ENCODE measurements at regions of chr18 and their contacts with region 1.

Region 1: DNA sequence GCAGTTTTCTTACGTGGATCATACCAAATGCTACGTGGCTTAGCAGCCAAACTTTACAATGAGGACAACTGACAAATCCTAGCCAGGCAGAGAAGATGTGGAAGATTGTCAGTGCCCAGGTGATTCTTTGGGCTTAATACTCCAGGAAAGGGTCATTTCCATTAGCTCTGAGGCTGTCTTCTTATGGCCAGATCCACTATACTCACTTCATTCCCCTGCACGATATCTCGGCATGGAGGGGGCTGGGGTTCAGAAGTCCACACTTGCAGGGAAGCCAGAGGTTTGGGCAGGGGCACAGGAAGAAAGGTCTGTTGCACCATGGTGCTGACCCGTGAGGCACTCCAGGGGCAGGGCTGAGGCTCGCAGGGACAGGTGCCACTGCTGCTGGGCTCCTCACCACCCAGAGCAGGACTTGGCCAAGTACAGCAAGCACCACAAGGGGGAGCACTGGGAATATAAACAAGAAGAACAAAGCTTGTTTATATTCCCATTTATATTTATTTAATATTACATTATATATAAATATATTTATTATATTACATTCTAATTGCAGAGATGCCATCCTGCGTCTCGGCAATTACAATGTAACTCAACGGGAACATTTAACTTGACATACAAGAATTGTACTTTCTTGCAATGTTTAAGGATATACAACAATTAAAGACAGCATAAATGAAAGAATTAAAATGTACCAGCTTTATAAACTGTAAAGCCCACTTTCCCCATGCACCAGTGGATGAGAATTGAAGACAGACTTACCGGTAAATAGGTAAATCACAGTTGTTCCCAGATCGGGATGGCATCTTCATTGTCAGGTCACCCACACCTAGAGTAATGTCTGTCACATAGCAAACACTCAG is 27.2 kb downstream of the CLUL1 start:
- DNase-seq: peak; percentile 36 to 79
- H3K4me3 ChIP-seq: no peak overlapping the region
- H3K27ac ChIP-seq: no peak overlapping the region
- H3K4me1 ChIP-seq: no peaks in the 10 kb centered on the region
- H3K27me3 ChIP-seq: no peaks in the 10 kb centered on the region
- CTCF ChIP-seq: peak; percentile 70 to 77 (median 76)
- EP300 ChIP-seq: no peak
- POLR2A ChIP-seq: no peak
- RAD21 ChIP-seq: peak; percentile 68 to 76

Region 2: DNA sequence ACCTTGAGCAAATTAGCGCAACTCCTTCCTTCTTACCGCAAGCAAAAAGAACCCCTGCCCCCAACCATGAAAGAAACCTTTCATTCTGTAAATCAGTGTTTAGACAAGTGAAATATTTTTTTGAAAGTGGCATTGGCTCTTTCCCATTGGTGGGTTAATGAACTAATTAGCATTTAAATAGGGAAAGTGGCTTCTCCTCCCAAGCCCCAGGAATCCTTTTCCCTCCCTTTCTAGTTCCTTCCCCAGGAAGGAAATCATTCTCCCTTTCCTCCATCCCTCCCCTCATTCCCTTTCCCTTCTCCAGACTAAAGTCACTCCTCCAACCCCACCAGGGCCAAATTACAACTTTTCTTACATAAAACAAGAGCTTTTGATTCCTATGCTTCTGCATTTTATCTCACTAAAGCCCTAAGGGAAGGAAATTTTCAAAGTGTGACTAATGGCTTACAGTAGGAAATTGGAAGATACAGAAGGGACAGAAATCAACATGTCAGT is 10.6 kb after region 1 on chr18:
- CTCF ChIA-PET with region 1: interaction called, 24 read pairs
- POLR2A ChIA-PET with region 1: interaction called, 3 read pairs
- DNase-seq: peak in 1 of 2 experiments; percentile 5
- H3K4me3 ChIP-seq: peak overlapping the region in 1 of 4 experiments; percentile 43; a peak in 1 of 8 replicates
- H3K27ac ChIP-seq: no peak overlapping the region
- H3K4me1 ChIP-seq: peaks cover 0 to 8% (median 2%) of the 10 kb centered on the region in 4 experiments; a peak in 3 of 7 replicates
- H3K27me3 ChIP-seq: no peaks in the 10 kb centered on the region
- CTCF ChIP-seq: no peak
- EP300 ChIP-seq: no peak
- POLR2A ChIP-seq: no peak
- RAD21 ChIP-seq: no peak

Region 3: DNA sequence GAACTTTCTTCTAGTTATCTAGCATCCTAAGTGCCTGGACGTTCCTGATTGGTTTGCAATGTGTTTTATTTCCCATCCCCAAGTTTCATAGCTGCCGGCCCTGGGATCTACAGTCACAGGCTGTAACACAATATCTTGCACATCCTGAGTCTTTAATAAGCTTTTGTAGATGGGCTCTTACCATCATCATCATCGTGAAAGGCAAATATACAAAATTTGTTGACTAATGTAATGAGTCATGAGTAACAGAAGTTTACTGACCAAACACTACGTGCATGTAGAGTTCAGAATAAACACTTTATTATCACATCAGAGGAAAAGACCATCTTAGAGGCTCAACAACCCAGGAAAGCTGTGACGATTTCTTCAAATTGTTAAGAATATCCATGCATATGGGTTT is 25.4 kb after region 1 on chr18:
- CTCF ChIA-PET with region 1: interaction called, 28 read pairs
- POLR2A ChIA-PET with region 1: no interaction called
- DNase-seq: no peak
- H3K4me3 ChIP-seq: no peak overlapping the region
- H3K27ac ChIP-seq: no peak overlapping the region
- H3K4me1 ChIP-seq: no peaks in the 10 kb centered on the region
- H3K27me3 ChIP-seq: no peaks in the 10 kb centered on the region
- CTCF ChIP-seq: no peak
- EP300 ChIP-seq: no peak
- POLR2A ChIP-seq: no peak
- RAD21 ChIP-seq: no peak

Region 4: DNA sequence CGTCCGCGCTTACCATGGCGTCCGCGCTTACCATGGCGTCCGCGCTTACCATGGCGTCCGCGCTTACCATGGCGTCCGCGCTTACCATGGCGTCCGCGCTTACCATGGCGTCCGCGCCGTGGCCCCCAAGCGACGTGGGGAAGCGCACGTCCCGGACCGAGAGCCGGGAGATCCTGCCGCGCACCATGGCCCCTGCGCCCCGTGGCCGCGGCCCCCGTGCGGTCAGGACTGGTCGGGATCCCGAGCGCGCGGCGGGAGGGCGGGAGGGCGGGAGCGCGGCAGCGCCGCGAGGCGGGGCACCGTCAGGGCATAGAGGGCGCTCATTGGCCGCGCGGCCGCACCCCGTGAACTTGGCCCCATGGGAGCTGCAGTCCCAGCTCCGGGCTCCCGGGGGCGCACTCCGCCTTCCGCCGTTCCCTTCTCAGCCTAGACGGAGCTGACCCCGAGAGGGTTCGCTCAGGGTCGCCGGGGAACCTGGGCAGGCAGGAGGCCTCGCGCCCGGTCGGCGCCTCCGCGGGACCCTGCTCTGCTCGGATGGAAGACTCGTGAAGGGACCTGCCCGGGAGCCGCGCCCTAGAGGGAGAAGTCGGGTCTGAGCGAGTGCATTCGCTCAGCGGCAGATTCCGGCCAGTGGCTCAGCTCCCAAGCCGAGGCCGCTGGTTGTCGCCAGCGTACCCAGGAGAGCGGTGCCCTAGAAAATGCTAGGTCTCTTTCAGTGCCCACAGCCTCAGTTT is 88.6 kb after region 1 on chr18 and contains the start of gene ENOSF1:
- CTCF ChIA-PET with region 1: interaction called, 13 read pairs
- POLR2A ChIA-PET with region 1: no interaction called
- DNase-seq: peak; percentile 79 to 99
- H3K4me3 ChIP-seq: peak within 1 kb of the TSS; percentile 64 to 86 (median 76)
- H3K27ac ChIP-seq: peak within 1 kb of the TSS; percentile 50; the same call in 1 of the 2 replicates
- H3K4me1 ChIP-seq: peaks cover 0 to 3% (median 1%) of the 10 kb centered on the region in 4 experiments; a peak in 2 of 7 replicates
- H3K27me3 ChIP-seq: no peaks in the 10 kb centered on the region
- CTCF ChIP-seq: peak; percentile 76 to 85 (median 84)
- EP300 ChIP-seq: no peak; a peak in 1 of 3 replicates
- POLR2A ChIP-seq: peak in 1 of 2 experiments; percentile 62; a peak in 1 of 3 replicates
- RAD21 ChIP-seq: peak; percentile 64 to 78
- total RNA-seq, gene ENOSF1: 25.6 and 26.4 TPM in 2 replicates

Region 5: GRCh38 chr18:750456-750855 is 126.5 kb after region 1 on chr18:
- CTCF ChIA-PET with region 1: no interaction called
- POLR2A ChIA-PET with region 1: no interaction called
- DNase-seq: no peak
- H3K4me3 ChIP-seq: no peak overlapping the region
- H3K27ac ChIP-seq: no peak overlapping the region
- H3K4me1 ChIP-seq: no peaks in the 10 kb centered on the region
- H3K27me3 ChIP-seq: no peaks in the 10 kb centered on the region
- CTCF ChIP-seq: no peak
- EP300 ChIP-seq: no peak
- POLR2A ChIP-seq: no peak
- RAD21 ChIP-seq: no peak

Measured in H1 (cell line).